Activated CD8-positive, alpha-beta T cell treated with anti-CD3 and anti-CD28 coated beads for 36 hours (primary cell): ENCODE measurements at regions of chr11 and their contacts with region 1.

Region 1: GRCh38 chr11:57345555-57346211 is 7.5 kb downstream of the P2RX3 start:
- DNase-seq: peak; percentile 85
- ATAC-seq: peak; percentile 87
- H3K4me3 Mint-ChIP-seq: no peak overlapping the region
- H3K27ac Mint-ChIP-seq: no peak overlapping the region
- H3K4me1 Mint-ChIP-seq: peaks cover 6% of the 10 kb centered on the region
- H3K27me3 Mint-ChIP-seq: peaks cover 3% of the 10 kb centered on the region
- CTCF ChIP-seq: peak; percentile 93

Region 2: DNA sequence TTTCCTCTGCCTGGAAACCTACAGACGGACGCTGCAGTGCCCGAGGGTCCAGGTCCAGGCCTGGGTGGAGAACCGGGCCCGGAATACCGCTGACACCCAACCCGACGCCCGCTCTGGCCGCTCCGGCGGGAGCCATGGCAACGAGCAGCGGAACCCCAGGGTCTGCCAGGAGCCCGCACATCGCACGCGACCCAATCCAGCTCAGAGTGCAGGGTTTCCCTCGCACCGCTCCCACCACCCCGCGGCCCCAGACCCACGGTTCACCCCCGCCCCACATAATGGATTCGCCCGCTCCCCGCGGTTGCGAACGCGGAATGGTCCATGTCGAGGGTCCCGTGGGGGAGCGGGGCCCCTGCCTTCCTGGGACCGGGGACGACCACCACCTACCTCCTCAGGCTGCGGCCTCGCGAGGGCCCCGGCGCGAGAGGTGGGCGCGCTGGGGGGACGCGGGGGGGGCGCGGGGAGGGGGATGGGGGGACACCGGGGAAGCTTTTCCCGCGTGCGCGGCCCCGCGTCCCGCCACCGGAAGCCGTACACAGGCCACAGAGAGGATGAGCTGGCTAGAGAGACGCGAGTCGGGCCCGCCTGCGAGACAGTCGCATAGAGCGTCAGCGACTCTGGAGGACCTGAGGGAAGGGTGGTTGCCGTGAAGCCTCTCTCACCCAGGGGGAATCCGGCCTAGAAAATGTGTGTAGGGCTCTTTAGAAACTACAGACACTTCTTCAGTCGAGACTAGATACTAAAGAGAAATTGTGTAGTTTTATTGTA is 10.2 kb before region 1 on chr11 and contains the start of gene SSRP1:
- CTCF ChIA-PET with region 1: interaction called, 13 read pairs
- POLR2A ChIA-PET with region 1: no interaction called
- intact Hi-C with region 1: no loop called
- DNase-seq: peak; percentile 91
- ATAC-seq: peak; percentile 98
- H3K4me3 Mint-ChIP-seq: peak within 1 kb of the TSS; percentile 96
- H3K27ac Mint-ChIP-seq: peak within 1 kb of the TSS; percentile 100
- H3K4me1 Mint-ChIP-seq: peaks cover 47% of the 10 kb centered on the region
- H3K27me3 Mint-ChIP-seq: no peaks in the 10 kb centered on the region
- CTCF ChIP-seq: no peak
- total RNA-seq, gene SSRP1: 284 to 290 TPM

Region 3: GRCh38 chr11:57358543-57358961 is 12.9 kb after region 1 on chr11:
- CTCF ChIA-PET with region 1: interaction called, 17 read pairs
- POLR2A ChIA-PET with region 1: no interaction called
- intact Hi-C with region 1: no loop called
- DNase-seq: no peak
- ATAC-seq: no peak
- H3K4me3 Mint-ChIP-seq: no peak overlapping the region
- H3K27ac Mint-ChIP-seq: no peak overlapping the region
- H3K4me1 Mint-ChIP-seq: no peaks in the 10 kb centered on the region
- H3K27me3 Mint-ChIP-seq: peaks cover 13% of the 10 kb centered on the region
- CTCF ChIP-seq: no peak

Region 4: GRCh38 chr11:57480409-57481137 is 134.9 kb after region 1 on chr11:
- CTCF ChIA-PET with region 1: interaction called, 117 read pairs
- POLR2A ChIA-PET with region 1: no interaction called
- intact Hi-C with region 1: loop called (anchors 5 kb)
- DNase-seq: peak; percentile 88
- ATAC-seq: peak; percentile 63
- H3K4me3 Mint-ChIP-seq: no peak overlapping the region
- H3K27ac Mint-ChIP-seq: no peak overlapping the region
- H3K4me1 Mint-ChIP-seq: peaks cover 19% of the 10 kb centered on the region
- H3K27me3 Mint-ChIP-seq: peaks cover 12% of the 10 kb centered on the region
- CTCF ChIP-seq: peak; percentile 90

Region 5: GRCh38 chr11:57638005-57638781 is 292.5 kb after region 1 on chr11:
- CTCF ChIA-PET with region 1: interaction called, 14 read pairs
- POLR2A ChIA-PET with region 1: no interaction called
- intact Hi-C with region 1: loop called (anchors 5 kb)
- DNase-seq: peak; percentile 22
- ATAC-seq: peak; percentile 43
- H3K4me3 Mint-ChIP-seq: peak overlapping the region; percentile 78
- H3K27ac Mint-ChIP-seq: peak overlapping the region; percentile 70
- H3K4me1 Mint-ChIP-seq: peaks cover 17% of the 10 kb centered on the region
- H3K27me3 Mint-ChIP-seq: peaks cover 33% of the 10 kb centered on the region
- CTCF ChIP-seq: no peak